GM10248 (cell line): ENCODE measurements at regions of chr1 and their contacts with region 1.

Region 1: DNA sequence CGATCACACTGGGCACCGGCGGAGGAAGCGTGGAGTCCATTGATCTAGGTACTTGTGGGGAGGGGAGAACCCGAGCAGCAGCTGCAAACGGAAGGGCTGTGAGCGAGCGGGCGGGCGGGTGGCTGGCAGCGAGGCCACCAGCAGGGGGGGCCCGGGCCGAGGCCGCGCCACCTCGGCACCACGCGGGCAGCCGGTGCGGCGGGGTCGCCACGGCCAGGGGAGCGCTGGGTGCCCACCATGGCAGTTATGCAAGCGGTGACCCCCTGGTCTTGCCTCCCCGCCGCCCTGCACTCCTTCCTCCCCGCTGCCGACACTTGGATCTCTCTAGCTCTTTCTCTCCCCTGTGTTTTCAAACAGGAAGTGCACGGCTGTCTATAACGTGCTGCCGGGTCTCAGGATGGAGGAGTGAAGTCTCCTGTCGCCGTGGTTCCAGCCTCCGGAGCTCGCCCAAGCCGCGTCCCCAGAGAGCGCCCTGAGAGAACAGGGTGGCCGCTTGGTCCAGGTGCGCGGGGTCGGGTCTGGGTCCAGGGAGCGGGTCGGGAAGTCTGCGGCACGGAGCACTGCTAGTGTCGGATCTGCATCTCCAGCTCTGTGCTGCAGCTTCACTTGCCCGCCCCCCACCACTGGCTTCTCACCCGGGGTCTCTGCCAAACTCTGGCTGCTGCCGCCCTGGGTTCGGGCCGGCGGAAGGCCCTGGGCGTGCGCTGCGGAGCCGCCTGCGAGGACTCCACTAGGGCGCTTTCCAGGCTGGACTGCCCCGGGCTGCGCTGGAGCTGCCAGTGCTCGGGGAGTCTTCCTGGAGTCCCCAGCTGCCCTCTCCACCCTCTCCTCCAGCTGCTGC is 22.7 kb downstream of the LRRC8D start:
- DNase-seq: peak; percentile 89
- CTCF ChIP-seq: peak; percentile 80

Region 2: DNA sequence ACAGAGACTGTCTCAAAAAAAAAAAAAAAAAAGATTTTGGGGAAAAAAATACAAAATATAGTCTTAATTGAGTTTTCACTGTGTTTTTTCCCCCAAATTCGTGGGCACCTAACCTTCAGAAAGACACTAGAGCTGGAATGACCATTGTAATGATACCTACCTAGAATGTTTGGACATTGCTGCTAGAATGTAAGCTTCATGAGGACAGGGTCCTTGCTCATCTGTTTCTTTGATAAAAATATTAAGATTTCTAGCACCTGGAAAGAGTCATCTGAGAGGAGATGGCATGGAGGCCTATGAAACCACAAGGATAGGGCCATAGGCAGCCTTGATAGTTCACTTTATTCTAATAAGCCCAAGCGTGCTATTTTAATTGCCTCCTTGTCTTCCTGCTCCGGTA is 16.2 kb before region 1 on chr1:
- CTCF ChIA-PET with region 1: interaction called, 36 read pairs
- POLR2A ChIA-PET with region 1: no interaction called
- DNase-seq: no peak
- CTCF ChIP-seq: no peak

Region 3: DNA sequence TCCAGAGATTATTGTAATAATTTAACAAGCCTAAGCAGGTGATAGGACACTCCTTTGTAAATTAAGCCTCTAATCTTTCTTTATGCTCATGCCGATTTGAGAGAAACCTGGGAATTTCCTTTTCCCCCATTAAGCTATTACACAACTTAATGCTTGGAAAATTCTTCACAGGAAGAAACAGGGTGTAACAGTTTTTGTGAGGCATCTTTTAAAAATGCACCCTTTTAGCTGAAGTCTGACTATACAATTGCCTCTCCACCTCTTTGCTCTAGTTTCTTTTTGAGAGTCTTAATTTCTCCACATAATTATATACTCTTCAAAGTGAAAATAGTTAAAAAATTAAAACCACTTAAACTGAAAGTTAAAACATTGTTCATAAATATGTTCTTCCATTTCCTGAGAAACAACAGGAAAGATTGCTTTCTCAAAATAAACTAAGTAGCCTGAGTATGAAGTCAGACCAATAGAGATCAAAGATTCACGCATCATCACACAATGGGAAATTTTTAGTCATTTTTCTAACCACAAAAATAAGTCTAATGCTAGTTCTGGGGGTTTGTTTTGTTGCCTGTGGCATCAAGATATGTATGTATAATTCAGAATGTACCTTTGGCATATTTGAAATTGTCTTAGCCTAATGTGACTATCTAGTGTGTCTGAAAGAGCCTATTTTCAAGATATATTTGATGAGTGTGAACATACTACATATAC is 12.1 kb after region 1 on chr1:
- CTCF ChIA-PET with region 1: interaction called, 23 read pairs
- POLR2A ChIA-PET with region 1: no interaction called
- DNase-seq: peak; percentile 27
- CTCF ChIP-seq: no peak

Region 4: DNA sequence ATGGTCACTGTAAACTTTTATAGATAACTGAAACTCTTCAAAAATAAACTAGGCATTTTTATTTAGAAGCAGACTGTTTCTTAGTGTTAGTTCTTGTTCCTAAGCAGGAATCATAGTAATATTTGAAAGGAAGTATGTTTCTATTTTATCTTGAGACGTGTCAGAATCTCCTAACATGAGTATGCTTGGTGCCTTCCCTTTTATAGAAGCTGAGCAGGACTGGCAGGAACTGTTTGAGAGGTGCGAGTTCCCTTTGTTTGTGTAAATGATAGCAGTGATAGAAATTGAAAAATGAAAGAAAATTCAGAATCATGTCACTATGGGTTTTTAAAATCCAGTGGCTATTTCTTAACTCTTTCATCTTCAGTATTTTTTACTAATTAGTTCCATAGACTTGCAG is 34.3 kb after region 1 on chr1:
- CTCF ChIA-PET with region 1: interaction called, 15 read pairs
- POLR2A ChIA-PET with region 1: no interaction called
- DNase-seq: no peak
- CTCF ChIP-seq: no peak

Region 5: GRCh38 chr1:89890085-89890752 is 46.7 kb after region 1 on chr1:
- CTCF ChIA-PET with region 1: no interaction called
- POLR2A ChIA-PET with region 1: no interaction called
- DNase-seq: no peak
- CTCF ChIP-seq: no peak

Region 6: DNA sequence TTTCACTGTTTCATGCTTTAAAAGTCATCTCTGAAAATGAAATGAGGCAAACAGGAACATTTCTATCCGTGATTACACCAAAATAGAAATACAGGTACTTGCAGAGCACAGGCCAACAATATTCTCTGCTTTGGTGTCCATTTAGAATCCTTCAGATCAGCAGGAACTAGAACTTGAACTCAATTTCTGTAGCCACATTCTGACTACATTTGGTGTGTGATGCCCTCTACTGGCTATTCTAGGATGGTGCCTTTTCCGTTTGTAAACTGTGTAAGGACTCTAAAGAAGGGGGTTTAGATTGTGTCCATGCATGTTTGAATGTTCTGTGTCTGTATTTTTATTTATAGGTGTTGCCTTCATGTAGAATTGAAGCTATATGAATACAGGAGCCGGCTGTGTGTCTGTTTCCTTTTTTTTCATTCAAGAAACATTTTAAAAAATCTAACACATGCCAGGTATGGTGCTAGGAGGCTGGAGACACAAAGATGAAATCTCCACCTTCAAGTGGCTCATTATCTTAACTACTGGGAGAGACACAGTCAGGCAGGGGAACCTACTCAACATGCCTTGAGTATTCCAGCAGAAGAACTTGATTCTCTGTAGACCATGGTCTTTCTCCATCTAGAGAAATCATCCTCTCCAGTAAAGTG is 143.8 kb after region 1 on chr1:
- CTCF ChIA-PET with region 1: interaction called, 23 read pairs
- POLR2A ChIA-PET with region 1: no interaction called
- DNase-seq: peak; percentile 73
- CTCF ChIP-seq: peak; percentile 84